Head of caudate nucleus (tissue), 42 donors: ENCODE measurements at regions of chr20 and their contacts with region 1.

Region 1: GRCh38 chr20:33731693-33732165 is at the start of gene ZNF341:
- DNase-seq: peak; percentile 74 to 96 (median 90)

Region 2: DNA sequence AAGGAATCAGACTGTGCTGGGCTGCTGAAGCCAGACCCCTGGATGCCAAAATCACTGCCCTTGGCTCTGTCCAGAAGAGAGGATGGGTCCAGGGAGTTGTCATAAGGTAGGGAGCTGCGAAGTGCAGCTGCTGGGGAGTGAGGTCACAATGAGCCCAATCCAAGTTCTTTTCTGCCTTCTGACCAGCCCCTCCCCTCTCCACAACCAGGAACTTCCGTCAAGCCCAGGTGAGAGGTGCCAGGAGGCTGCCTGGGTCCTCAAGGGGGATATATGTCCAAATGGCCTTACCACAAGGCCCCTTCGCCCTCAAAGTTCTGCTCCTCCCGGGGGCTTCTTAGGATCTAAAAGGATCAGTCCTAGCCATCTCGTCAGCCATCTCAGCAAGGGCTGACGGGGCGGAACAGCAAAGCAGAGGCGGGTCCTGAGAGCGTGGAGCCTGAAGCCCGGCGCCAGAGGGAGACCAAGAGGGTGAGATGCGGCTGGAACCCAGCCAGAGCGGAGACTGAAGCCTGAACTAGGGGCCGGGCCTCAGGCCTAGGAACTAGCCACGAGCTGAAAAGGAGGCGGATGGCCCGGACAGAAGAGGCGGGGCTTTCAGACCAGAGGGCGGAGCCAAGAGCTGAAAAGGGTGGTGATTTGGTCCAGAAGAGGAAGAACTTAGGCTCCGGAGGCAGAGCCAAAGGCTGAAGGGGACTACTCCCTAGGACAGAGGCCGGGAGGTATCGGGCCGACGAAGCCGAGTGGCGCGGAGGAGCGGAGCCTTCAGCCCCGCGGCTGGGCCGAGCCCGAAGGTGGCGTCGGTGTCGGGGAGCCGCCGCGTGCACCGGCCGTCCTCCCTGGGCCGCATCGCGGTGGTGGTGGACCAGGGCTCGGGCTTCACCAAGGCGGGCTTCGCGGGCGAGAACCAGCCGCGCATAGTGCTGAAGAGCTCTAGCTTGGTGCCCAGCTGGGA is 65.2 kb before region 1 on chr20 and contains the start of gene ACTL10:
- intact Hi-C with region 1: loop called (anchors 10 kb)
- DNase-seq: peak; percentile 87 to 98 (median 94)

Region 3: DNA sequence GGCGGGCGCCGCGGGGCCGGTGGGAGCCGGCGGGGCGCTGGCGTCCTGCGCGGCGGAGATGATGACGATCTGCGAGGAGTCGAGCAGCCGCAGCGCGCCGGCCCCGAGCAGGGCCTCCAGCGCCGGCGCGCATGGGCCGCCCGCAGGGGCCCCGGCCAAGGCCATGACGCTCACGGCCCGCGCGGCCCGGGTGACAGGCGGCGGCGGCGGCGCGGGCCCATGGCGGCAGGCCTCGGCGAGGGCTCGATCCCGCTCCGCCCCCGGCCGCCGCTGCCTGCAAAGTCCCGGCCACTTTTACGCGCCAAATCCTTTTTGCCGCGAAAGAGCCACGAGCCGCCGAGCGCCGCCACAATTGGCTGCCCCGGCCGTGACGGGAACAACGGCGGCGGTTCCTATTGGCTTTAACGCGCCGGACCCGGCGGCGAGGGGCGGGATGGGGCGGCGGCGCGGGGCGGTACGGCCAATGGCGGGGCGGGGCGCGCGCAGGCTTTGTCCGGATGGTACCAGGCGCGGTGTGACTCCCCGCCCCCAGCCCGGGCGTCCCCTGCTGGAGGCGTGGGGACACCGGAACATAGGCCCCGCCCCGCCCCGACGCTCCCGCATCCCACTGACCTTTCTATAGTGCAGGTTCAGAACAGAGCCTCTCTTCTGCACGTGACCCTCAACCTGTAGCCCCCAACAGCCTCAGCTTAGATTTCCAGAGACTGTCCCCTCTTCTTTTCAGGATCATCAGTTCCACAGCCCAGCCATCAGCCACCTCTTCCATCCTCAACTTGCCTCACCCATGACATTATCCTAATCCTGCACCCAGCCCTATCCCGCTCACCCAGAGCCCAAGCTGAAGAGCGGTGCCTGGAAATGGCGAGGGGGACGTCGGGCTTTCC is 45.4 kb before region 1 on chr20 and contains the start of gene E2F1:
- intact Hi-C with region 1: loop called (anchors 2 kb)
- DNase-seq: peak; percentile 87 to 99 (median 97)

Region 4: DNA sequence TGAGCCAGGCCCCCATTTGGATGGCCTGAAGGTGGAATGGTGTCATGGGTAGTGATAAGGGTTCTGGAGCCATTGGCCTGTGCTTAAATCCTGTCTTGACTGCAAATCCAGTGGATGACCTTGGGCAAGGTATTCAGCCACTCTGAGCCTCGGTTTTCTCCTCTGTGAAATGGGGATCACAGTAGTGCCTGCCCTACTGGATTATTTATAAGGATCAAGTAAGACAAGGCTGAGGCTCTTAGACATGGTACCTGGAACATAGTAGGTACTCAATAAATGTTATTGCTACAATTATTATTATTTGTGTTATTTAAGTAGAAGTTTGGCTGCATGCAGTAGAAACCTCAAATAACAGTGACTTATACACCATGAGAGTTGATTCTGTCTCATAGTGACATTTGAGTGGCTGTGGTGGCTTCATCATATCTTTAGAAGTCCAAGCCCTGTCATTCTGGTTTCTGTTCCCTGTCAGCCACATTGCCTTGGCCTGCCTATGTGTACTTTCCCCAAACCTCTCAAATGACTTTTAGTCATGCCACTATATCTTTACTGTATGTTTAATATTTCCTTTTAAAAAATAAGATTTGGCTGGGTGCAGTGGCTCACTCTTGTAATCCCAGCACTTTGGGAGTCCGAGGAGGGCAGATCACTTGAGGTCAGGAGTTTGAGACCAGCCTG is 41.8 kb after region 1 on chr20:
- intact Hi-C with region 1: no loop called
- DNase-seq: no peak

Region 5: DNA sequence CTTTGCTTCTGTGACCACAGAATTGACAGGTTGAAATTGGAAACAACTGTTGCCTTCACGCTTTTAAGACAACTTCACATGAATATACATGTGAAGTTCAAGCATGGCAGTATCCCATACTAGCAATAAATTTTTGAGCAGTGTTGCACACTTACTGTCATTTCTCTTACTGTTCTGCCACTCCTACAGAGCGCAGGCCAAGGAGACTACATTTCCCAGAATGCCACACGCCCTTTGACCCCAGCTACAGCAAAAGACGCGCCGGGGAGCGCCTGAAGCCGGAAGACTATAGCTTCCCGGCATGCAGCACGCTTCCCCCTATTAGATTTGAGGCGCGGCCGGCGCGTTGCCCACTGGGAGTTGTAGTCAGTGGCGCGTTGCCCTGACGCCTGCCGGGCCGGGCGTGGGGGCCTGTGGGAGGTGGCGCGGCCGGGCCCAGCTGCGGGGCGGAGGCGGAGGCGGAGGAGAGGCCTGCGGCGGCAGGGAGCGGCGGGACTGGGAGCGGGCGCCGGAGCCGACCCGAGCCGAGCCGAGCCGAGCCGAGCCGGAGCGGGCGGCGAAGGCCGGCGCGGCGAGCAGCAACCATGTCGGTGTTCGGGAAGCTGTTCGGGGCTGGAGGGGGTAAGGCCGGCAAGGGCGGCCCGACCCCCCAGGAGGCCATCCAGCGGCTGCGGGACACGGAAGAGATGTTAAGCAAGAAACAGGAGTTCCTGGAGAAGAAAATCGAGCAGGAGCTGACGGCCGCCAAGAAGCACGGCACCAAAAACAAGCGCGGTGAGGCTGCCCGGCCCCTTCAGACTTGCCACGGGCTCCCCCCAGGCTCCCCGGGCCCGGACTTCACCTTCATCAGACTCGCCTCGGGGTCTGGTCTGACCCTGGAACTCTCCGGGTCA is 79.4 kb after region 1 on chr20 and contains the start of gene CHMP4B:
- intact Hi-C with region 1: loop called (anchors 5 kb)
- DNase-seq: peak; percentile 98 to 100 (median 99)

Region 6: GRCh38 chr20:33992923-33993575 is 261.3 kb after region 1 on chr20:
- intact Hi-C with region 1: loop called (anchors 10 kb)
- DNase-seq: peak; percentile 98 to 100 (median 100)

Region 7: GRCh38 chr20:34111702-34112599 is 380.2 kb after region 1 on chr20 and contains the start of gene EIF2S2:
- intact Hi-C with region 1: loop called (anchors 10 kb)
- DNase-seq: peak; percentile 84 to 97 (median 92)